MCF 10A (cell line): ENCODE measurements at regions of chr16 and their contacts with region 1.

Region 1: GRCh38 chr16:3129137-3130131 is 5.4 kb upstream of the ZNF213 start:
- DNase-seq: peak; percentile 90
- H3K4me3 Mint-ChIP-seq: peak overlapping the region; percentile 80
- H3K27ac Mint-ChIP-seq: peak overlapping the region; percentile 51
- H3K4me1 Mint-ChIP-seq: peaks cover 21% of the 10 kb centered on the region
- H3K27me3 Mint-ChIP-seq: no peaks in the 10 kb centered on the region
- CTCF ChIP-seq: peak; percentile 89

Region 2: DNA sequence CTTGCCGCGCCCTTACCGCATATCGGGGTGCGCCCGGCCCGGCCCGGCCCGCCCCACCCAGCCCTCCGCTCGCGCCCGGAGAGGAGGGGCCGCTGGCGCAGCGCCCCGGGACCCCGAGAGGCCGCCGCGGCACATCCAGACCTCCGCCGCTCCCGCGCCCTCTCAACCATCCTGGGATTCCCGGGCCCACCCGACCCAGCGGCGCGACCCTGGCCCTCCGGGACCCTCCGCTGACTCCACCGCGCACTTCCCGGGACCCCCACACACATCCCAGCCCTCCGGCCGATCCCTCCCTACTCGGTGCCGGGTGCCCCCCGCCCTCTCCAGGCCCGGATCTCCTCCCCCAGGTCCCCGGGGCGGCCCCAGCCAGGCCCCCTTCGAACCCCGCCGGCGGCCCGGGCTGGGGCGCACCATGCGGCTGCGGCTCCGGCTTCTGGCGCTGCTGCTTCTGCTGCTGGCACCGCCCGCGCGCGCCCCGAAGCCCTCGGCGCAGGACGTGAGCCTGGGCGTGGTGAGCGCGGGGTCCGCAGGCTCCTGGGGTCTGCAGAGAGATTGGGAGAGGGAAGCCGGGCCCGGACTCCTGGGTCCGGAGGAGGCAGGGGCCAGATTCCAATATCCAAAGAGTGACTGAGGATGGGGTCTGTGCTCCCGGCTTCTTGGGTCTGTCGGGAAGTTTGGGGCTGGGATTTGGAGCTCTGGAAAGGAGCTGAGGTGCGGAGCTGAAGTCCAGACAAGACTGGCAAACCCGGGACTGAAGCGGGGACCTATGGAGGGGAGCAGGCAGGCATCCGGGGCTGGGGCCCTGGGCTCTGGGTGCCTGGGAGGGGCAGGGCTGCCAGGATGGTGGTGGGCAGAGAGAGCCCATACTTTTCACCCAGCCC is 82.7 kb before region 1 on chr16 and contains the start of gene MMP25:
- CTCF ChIA-PET with region 1: interaction called, 19 read pairs
- POLR2A ChIA-PET with region 1: interaction called, 4 read pairs
- intact Hi-C with region 1: no loop called
- DNase-seq: no peak
- H3K4me3 Mint-ChIP-seq: peak within 1 kb of the TSS; percentile 43
- H3K27ac Mint-ChIP-seq: no peak within 1 kb of the TSS
- H3K4me1 Mint-ChIP-seq: no peaks in the 10 kb centered on the region
- H3K27me3 Mint-ChIP-seq: peaks cover 52% of the 10 kb centered on the region
- CTCF ChIP-seq: no peak
- total RNA-seq, gene MMP25: 0.26 and 0.64 TPM in 2 replicates

Region 3: GRCh38 chr16:3106205-3106928 is 23.1 kb before region 1 on chr16:
- CTCF ChIA-PET with region 1: interaction called, 34 read pairs
- POLR2A ChIA-PET with region 1: interaction called, 33 read pairs
- intact Hi-C with region 1: no loop called
- DNase-seq: peak; percentile 91
- H3K4me3 Mint-ChIP-seq: peak overlapping the region; percentile 74
- H3K27ac Mint-ChIP-seq: peak overlapping the region; percentile 82
- H3K4me1 Mint-ChIP-seq: peaks cover 6% of the 10 kb centered on the region
- H3K27me3 Mint-ChIP-seq: no peaks in the 10 kb centered on the region
- CTCF ChIP-seq: no peak

Region 4: DNA sequence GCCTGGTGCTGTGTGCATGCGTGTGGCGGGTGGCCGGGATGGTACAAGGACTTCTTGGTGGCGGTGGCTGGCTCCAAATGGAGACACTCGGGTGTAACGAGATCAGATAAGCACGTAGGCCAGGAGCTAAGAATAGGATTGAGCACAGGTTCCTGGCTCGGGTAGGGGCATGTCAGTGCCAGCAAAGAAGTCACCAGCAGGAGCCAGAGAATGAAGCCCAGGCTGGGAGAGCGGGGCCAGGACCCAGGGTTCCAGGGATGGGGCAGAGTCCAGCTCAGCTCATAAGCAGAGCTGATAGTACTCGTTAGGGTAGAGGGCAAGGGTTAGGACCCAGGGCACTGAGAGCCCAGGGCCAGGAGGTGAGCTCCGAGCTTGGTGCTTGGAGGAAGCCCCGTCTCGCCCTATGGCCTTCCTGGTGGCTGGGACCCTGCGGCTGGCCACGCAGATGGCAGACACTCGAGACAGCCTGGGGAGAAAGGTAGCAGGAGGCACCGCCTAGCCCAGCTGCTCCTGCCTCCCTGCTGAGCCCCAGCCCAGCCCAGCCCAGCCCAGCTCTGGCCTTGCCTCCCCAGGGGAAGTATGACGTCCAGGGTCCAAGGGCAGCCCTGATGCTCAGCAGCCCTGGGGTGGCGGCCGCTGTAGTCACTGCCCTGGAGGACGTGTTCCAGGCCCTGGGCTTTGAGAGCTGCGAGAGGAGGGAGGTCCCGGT is 14.3 kb after region 1 on chr16:
- CTCF ChIA-PET with region 1: interaction called, 75 read pairs
- POLR2A ChIA-PET with region 1: interaction called, 105 read pairs
- intact Hi-C with region 1: no loop called
- DNase-seq: no peak
- H3K4me3 Mint-ChIP-seq: no peak overlapping the region
- H3K27ac Mint-ChIP-seq: no peak overlapping the region
- H3K4me1 Mint-ChIP-seq: no peaks in the 10 kb centered on the region
- H3K27me3 Mint-ChIP-seq: no peaks in the 10 kb centered on the region
- CTCF ChIP-seq: no peak

Region 5: GRCh38 chr16:3158471-3159314 is 29.3 kb after region 1 on chr16:
- CTCF ChIA-PET with region 1: interaction called, 10 read pairs
- POLR2A ChIA-PET with region 1: interaction called, 56 read pairs
- intact Hi-C with region 1: no loop called
- DNase-seq: peak; percentile 95
- H3K4me3 Mint-ChIP-seq: peak overlapping the region; percentile 83
- H3K27ac Mint-ChIP-seq: peak overlapping the region; percentile 98
- H3K4me1 Mint-ChIP-seq: no peaks in the 10 kb centered on the region
- H3K27me3 Mint-ChIP-seq: no peaks in the 10 kb centered on the region
- CTCF ChIP-seq: no peak

Region 6: GRCh38 chr16:3173892-3174617 is 44.6 kb after region 1 on chr16:
- CTCF ChIA-PET with region 1: interaction called, 18 read pairs
- POLR2A ChIA-PET with region 1: interaction called, 6 read pairs
- intact Hi-C with region 1: no loop called
- DNase-seq: peak; percentile 43
- H3K4me3 Mint-ChIP-seq: peak overlapping the region; percentile 67
- H3K27ac Mint-ChIP-seq: peak overlapping the region; percentile 57
- H3K4me1 Mint-ChIP-seq: peaks cover 6% of the 10 kb centered on the region
- H3K27me3 Mint-ChIP-seq: no peaks in the 10 kb centered on the region
- CTCF ChIP-seq: peak; percentile 13